GM12878 (cell line): ENCODE measurements at regions of chr15 and their contacts with region 1.

Region 1: GRCh38 chr15:37638116-37638515 is 296.3 kb upstream of the TMCO5A start:
- DNase-seq: no peak
- ATAC-seq: no peak
- H3K4me3 ChIP-seq: no peak overlapping the region
- H3K27ac ChIP-seq: no peak overlapping the region
- H3K4me1 ChIP-seq: no peaks in the 10 kb centered on the region
- H3K27me3 ChIP-seq: no peaks in the 10 kb centered on the region
- CTCF ChIP-seq: no peak
- EP300 ChIP-seq: no peak
- POLR2A ChIP-seq: no peak
- RAD21 ChIP-seq: no peak

Region 2: DNA sequence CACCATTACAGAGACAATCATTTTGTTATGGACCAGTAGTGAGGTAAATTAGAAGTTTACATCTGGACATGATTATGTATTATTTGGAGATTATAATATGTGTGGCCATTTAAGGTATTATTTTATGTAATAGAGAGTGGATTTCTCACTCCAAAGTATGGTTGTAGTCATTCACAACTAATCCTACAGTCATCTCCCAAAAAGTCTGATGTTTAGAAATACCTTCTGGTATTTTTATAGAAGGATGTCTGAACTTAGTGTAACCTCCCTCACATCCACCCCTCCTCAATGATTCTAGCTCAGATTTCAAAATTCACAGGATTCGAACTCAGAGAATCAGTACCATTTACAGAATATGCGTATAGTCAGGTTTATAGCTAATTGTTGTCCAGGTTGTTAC is 191.2 kb before region 1 on chr15:
- CTCF ChIA-PET with region 1: no interaction called
- POLR2A ChIA-PET with region 1: no interaction called
- RAD21 ChIA-PET with region 1: no interaction called
- SMC1A ChIA-PET with region 1: no interaction called
- in situ Hi-C with region 1: no loop called
- intact Hi-C with region 1: no loop called
- DNase-seq: no peak
- ATAC-seq: no peak
- H3K4me3 ChIP-seq: no peak overlapping the region
- H3K27ac ChIP-seq: no peak overlapping the region
- H3K4me1 ChIP-seq: no peaks in the 10 kb centered on the region
- H3K27me3 ChIP-seq: no peaks in the 10 kb centered on the region
- CTCF ChIP-seq: no peak
- EP300 ChIP-seq: no peak
- POLR2A ChIP-seq: no peak
- RAD21 ChIP-seq: no peak

Region 3: GRCh38 chr15:37616215-37616614 is 21.9 kb before region 1 on chr15:
- CTCF ChIA-PET with region 1: no interaction called
- POLR2A ChIA-PET with region 1: no interaction called
- RAD21 ChIA-PET with region 1: no interaction called
- SMC1A ChIA-PET with region 1: no interaction called
- in situ Hi-C with region 1: no loop called
- intact Hi-C with region 1: no loop called
- DNase-seq: no peak
- ATAC-seq: no peak
- H3K4me3 ChIP-seq: no peak overlapping the region
- H3K27ac ChIP-seq: no peak overlapping the region
- H3K4me1 ChIP-seq: no peaks in the 10 kb centered on the region
- H3K27me3 ChIP-seq: no peaks in the 10 kb centered on the region
- CTCF ChIP-seq: no peak
- EP300 ChIP-seq: no peak
- POLR2A ChIP-seq: no peak
- RAD21 ChIP-seq: no peak

Region 4: DNA sequence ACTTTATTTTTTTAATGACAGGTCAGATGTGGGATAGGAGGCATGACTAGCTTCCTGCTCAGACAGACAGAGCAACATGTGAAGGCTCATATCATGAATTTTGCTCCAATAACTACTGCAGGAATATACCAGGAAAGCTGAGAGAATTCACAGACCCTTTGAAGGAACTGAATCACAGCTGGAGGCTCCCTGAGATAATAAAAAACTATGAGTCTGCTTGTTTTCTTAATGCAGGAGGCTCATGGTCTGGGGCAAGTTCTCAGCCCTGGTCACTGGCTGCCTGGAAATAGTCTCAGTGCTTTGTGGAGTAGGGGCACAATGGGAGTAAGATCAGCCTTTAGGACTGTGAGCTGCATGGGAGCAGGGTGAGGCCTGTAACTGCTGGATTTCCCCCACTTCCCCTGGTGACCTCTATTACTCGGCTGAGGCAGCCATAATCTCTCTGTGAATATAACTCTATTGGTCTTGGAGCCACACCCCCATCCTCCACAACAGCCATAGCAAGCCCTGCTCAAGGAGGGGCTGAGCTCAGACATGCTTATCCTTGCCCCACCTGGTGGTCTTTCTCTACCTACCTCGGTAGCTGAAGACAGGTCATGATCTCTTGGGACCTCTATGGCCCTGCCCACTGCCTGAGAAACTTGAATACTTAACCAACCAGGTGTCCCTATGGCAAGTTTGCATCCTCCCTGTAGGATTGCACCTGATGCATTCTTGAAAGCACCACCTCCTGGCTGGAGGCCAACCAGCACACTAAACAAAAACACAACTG is 14.7 kb after region 1 on chr15:
- CTCF ChIA-PET with region 1: interaction called, 4 read pairs
- POLR2A ChIA-PET with region 1: no interaction called
- RAD21 ChIA-PET with region 1: no interaction called
- SMC1A ChIA-PET with region 1: interaction called, 12 read pairs
- in situ Hi-C with region 1: no loop called
- intact Hi-C with region 1: no loop called
- DNase-seq: no peak
- ATAC-seq: no peak
- H3K4me3 ChIP-seq: no peak overlapping the region
- H3K27ac ChIP-seq: no peak overlapping the region
- H3K4me1 ChIP-seq: no peaks in the 10 kb centered on the region
- H3K27me3 ChIP-seq: no peaks in the 10 kb centered on the region
- CTCF ChIP-seq: no peak
- EP300 ChIP-seq: no peak
- POLR2A ChIP-seq: no peak
- RAD21 ChIP-seq: no peak

Region 5: GRCh38 chr15:37880009-37880834 is 242.1 kb after region 1 on chr15:
- CTCF ChIA-PET with region 1: no interaction called
- POLR2A ChIA-PET with region 1: no interaction called
- RAD21 ChIA-PET with region 1: no interaction called
- SMC1A ChIA-PET with region 1: no interaction called
- in situ Hi-C with region 1: no loop called
- intact Hi-C with region 1: no loop called
- DNase-seq: no peak
- ATAC-seq: peak; percentile 57
- H3K4me3 ChIP-seq: no peak overlapping the region
- H3K27ac ChIP-seq: no peak overlapping the region
- H3K4me1 ChIP-seq: no peaks in the 10 kb centered on the region
- H3K27me3 ChIP-seq: no peaks in the 10 kb centered on the region
- CTCF ChIP-seq: peak; percentile 36 to 65 (median 57); a peak in 5 of 6 replicates
- EP300 ChIP-seq: no peak
- POLR2A ChIP-seq: no peak
- RAD21 ChIP-seq: peak; percentile 55